ENCODE measurements at regions of chr2 and their contacts with region 1.

Region 1: DNA sequence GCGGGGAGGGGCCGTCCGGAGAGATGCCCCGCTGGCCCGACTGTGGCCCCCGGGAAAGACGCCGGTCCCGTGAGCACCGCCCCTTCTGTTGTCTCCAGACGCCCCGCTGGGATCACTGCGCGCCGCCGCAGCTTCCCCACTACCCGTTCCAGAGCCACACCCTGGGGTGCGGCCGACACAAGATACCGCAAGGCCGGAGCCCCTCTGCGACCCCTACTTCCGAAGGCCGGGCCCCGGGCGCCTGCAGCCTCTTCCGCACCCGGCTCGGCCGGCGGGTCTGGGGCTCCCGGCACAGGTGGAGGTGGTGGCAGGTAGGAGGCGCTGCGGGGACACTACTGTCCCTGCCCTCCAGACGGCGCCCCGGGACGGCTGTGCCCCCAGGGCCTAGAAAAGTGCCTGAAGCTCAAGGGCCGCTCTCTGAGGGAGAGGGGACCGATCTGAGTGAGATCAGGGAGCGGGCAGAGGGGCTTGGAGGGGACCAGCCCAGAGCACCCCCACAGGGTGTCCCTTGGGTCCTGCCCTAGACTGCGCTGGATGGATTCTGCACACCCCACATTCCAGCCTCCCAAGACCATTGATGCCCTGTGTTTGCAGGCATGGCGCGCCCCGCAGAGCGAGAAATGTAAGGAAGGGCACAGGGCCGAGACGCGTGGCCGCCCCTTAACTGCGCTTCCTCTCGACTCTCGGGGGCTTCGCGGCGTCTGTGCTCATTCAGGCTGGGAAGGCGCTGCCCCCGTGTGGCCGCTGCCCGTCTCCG is 80.0 kb downstream of the GFPT1 start:
- DNase-seq: peak; percentile 84
- ATAC-seq: peak; percentile 92
- H3K4me3 Mint-ChIP-seq: peak overlapping the region; percentile 60
- H3K27ac Mint-ChIP-seq: no peak overlapping the region
- H3K4me1 Mint-ChIP-seq: peaks cover 12% of the 10 kb centered on the region
- H3K27me3 Mint-ChIP-seq: peaks cover 35% of the 10 kb centered on the region

Region 2: GRCh38 chr2:69020496-69021426 is 286.2 kb before region 1 on chr2:
- CTCF ChIA-PET with region 1: interaction called, 20 read pairs
- POLR2A ChIA-PET with region 1: no interaction called
- DNase-seq: no peak
- ATAC-seq: no peak
- H3K4me3 Mint-ChIP-seq: no peak overlapping the region
- H3K27ac Mint-ChIP-seq: no peak overlapping the region
- H3K4me1 Mint-ChIP-seq: no peaks in the 10 kb centered on the region
- H3K27me3 Mint-ChIP-seq: peaks cover 35% of the 10 kb centered on the region